B cell (primary cell): ENCODE measurements at regions of chr16 and their contacts with region 1.

Region 1: GRCh38 chr16:22077700-22078313 is 14.5 kb upstream of the VWA3A start:
- DNase-seq: peak; percentile 79
- ATAC-seq: peak; percentile 60
- H3K4me3 ChIP-seq: no peak overlapping the region
- H3K4me3 Mint-ChIP-seq: no peak overlapping the region
- H3K27ac ChIP-seq: no peak overlapping the region
- H3K27ac Mint-ChIP-seq: no peak overlapping the region
- H3K4me1 ChIP-seq: no peaks in the 10 kb centered on the region
- H3K4me1 Mint-ChIP-seq: no peaks in the 10 kb centered on the region
- H3K27me3 ChIP-seq: no peaks in the 10 kb centered on the region
- H3K27me3 Mint-ChIP-seq: no peaks in the 10 kb centered on the region
- CTCF ChIP-seq: peak; percentile 96

Region 2: GRCh38 chr16:21989133-21989532 is 88.7 kb before region 1 on chr16:
- CTCF ChIA-PET with region 1: interaction called, 14 read pairs
- POLR2A ChIA-PET with region 1: no interaction called
- intact Hi-C with region 1: no loop called
- DNase-seq: no peak
- ATAC-seq: no peak
- H3K4me3 ChIP-seq: no peak overlapping the region
- H3K4me3 Mint-ChIP-seq: no peak overlapping the region
- H3K27ac ChIP-seq: no peak overlapping the region
- H3K27ac Mint-ChIP-seq: no peak overlapping the region
- H3K4me1 ChIP-seq: no peaks in the 10 kb centered on the region
- H3K4me1 Mint-ChIP-seq: no peaks in the 10 kb centered on the region
- H3K27me3 ChIP-seq: no peaks in the 10 kb centered on the region
- H3K27me3 Mint-ChIP-seq: no peaks in the 10 kb centered on the region
- CTCF ChIP-seq: no peak

Region 3: GRCh38 chr16:22001591-22001990 is 76.2 kb before region 1 on chr16:
- CTCF ChIA-PET with region 1: interaction called, 290 read pairs
- POLR2A ChIA-PET with region 1: no interaction called
- intact Hi-C with region 1: loop called (anchors 1 kb)
- DNase-seq: peak; percentile 16
- ATAC-seq: no peak
- H3K4me3 ChIP-seq: no peak overlapping the region
- H3K4me3 Mint-ChIP-seq: no peak overlapping the region
- H3K27ac ChIP-seq: no peak overlapping the region
- H3K27ac Mint-ChIP-seq: no peak overlapping the region
- H3K4me1 ChIP-seq: peaks cover 4 to 9% of the 10 kb centered on the region in 2 donors
- H3K4me1 Mint-ChIP-seq: peaks cover 6% of the 10 kb centered on the region
- H3K27me3 ChIP-seq: no peaks in the 10 kb centered on the region
- H3K27me3 Mint-ChIP-seq: no peaks in the 10 kb centered on the region
- CTCF ChIP-seq: no peak

Region 4: GRCh38 chr16:22016927-22017326 is 60.9 kb before region 1 on chr16:
- CTCF ChIA-PET with region 1: interaction called, 16 read pairs
- POLR2A ChIA-PET with region 1: no interaction called
- intact Hi-C with region 1: no loop called
- DNase-seq: no peak
- ATAC-seq: no peak
- H3K4me3 ChIP-seq: no peak overlapping the region
- H3K4me3 Mint-ChIP-seq: no peak overlapping the region
- H3K27ac ChIP-seq: no peak overlapping the region
- H3K27ac Mint-ChIP-seq: no peak overlapping the region
- H3K4me1 ChIP-seq: peaks cover 13 to 15% of the 10 kb centered on the region in 2 donors
- H3K4me1 Mint-ChIP-seq: peaks cover 57% of the 10 kb centered on the region
- H3K27me3 ChIP-seq: no peaks in the 10 kb centered on the region
- H3K27me3 Mint-ChIP-seq: no peaks in the 10 kb centered on the region
- CTCF ChIP-seq: no peak

Region 5: GRCh38 chr16:22055878-22056277 is 21.9 kb before region 1 on chr16:
- CTCF ChIA-PET with region 1: interaction called, 61 read pairs
- POLR2A ChIA-PET with region 1: no interaction called
- intact Hi-C with region 1: no loop called
- DNase-seq: no peak
- ATAC-seq: no peak
- H3K4me3 ChIP-seq: no peak overlapping the region
- H3K4me3 Mint-ChIP-seq: no peak overlapping the region
- H3K27ac ChIP-seq: no peak overlapping the region
- H3K27ac Mint-ChIP-seq: no peak overlapping the region
- H3K4me1 ChIP-seq: no peaks in the 10 kb centered on the region
- H3K4me1 Mint-ChIP-seq: peaks cover 13% of the 10 kb centered on the region
- H3K27me3 ChIP-seq: no peaks in the 10 kb centered on the region
- H3K27me3 Mint-ChIP-seq: no peaks in the 10 kb centered on the region
- CTCF ChIP-seq: no peak

Region 6: GRCh38 chr16:22091758-22092600 is 14.2 kb after region 1 on chr16 and contains the start of gene VWA3A:
- CTCF ChIA-PET with region 1: interaction called, 18 read pairs
- POLR2A ChIA-PET with region 1: no interaction called
- intact Hi-C with region 1: no loop called
- DNase-seq: no peak
- ATAC-seq: no peak
- H3K4me3 ChIP-seq: no peak within 1 kb of the TSS
- H3K4me3 Mint-ChIP-seq: no peak within 1 kb of the TSS
- H3K27ac ChIP-seq: no peak within 1 kb of the TSS
- H3K27ac Mint-ChIP-seq: no peak within 1 kb of the TSS
- H3K4me1 ChIP-seq: no peaks in the 10 kb centered on the region
- H3K4me1 Mint-ChIP-seq: no peaks in the 10 kb centered on the region
- H3K27me3 ChIP-seq: peaks cover 0 to 3% (median 1%) of the 10 kb centered on the region in 4 experiments
- H3K27me3 Mint-ChIP-seq: peaks cover 10% of the 10 kb centered on the region
- CTCF ChIP-seq: no peak
- total RNA-seq, gene VWA3A: 0.47 and 0.80 TPM in 2 replicates

Region 7: DNA sequence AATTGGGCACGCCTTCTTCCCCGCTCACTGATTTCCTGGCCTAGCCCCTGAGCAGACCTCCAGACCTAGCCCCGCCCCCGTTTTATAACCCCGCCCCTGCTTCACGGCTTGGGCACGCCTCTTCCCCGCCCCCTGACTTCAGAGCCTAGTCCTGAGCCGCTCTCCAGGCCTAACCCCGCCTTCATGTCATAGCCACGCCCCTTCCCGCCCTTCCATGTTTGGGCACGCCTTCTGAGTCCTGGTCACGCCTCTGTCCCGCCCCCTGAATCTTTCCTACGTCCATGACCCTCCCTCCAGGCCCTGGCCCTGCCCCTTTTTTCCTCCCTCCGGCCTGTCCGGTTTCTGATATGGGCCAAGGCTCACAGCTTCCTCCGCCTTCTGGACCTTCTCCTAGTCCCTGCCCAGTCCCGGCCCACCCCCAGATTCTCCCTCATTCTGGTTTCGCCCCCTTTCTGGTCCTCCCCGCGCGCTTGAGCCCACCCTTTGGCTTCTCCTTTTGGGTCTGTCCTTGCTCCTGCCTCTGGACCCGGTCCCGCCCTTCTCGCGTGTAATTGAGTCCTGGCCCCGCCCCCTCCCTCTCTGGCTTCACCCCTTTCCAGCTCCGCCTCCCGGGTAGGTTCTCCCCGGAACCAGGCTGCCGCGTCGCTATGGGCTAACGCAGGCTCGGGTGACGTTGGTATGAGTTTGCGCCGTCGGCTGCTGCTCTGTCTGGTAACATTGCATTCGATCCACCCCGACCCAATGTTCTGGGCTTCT is 113.1 kb after region 1 on chr16:
- CTCF ChIA-PET with region 1: interaction called, 26 read pairs
- POLR2A ChIA-PET with region 1: interaction called, 3 read pairs
- intact Hi-C with region 1: loop called (anchors 1 kb)
- DNase-seq: peak; percentile 100
- ATAC-seq: peak; percentile 58
- H3K4me3 ChIP-seq: peak overlapping the region; percentile 53 to 78 (median 66)
- H3K4me3 Mint-ChIP-seq: peak overlapping the region; percentile 99
- H3K27ac ChIP-seq: peak overlapping the region; percentile 96 to 100
- H3K27ac Mint-ChIP-seq: peak overlapping the region; percentile 100
- H3K4me1 ChIP-seq: peaks cover 43 to 52% of the 10 kb centered on the region in 2 donors
- H3K4me1 Mint-ChIP-seq: peaks cover 59% of the 10 kb centered on the region
- H3K27me3 ChIP-seq: no peaks in the 10 kb centered on the region
- H3K27me3 Mint-ChIP-seq: peaks cover 3% of the 10 kb centered on the region
- CTCF ChIP-seq: no peak

Region 8: DNA sequence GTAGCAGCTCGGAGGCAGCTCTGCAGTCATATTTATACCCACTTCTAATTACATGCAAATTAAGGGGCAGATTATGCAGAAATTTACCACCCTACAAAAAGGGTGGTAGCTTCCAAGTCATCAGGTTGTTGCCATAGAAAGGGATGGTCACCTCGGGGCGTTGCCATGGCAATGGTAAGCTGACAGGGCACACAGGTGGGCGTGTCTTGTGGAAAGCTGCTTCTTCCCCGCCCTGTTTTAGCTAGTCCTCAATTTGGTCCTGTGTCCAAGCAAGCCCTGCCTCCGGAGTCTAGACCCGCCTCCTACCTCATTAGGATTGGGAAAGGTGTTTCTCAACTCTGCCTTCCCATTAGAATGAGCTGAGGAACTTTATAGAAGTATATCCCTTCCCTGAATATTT is 834.8 kb after region 1 on chr16:
- CTCF ChIA-PET with region 1: no interaction called
- POLR2A ChIA-PET with region 1: no interaction called
- intact Hi-C with region 1: no loop called
- DNase-seq: no peak
- ATAC-seq: no peak
- H3K4me3 ChIP-seq: no peak overlapping the region
- H3K4me3 Mint-ChIP-seq: no peak overlapping the region
- H3K27ac ChIP-seq: no peak overlapping the region
- H3K27ac Mint-ChIP-seq: no peak overlapping the region
- H3K4me1 ChIP-seq: no peaks in the 10 kb centered on the region
- H3K4me1 Mint-ChIP-seq: no peaks in the 10 kb centered on the region
- H3K27me3 ChIP-seq: peaks cover 0 to 7% (median 0%) of the 10 kb centered on the region in 4 experiments
- H3K27me3 Mint-ChIP-seq: peaks cover 24% of the 10 kb centered on the region
- CTCF ChIP-seq: no peak